H1 (cell line): ENCODE measurements at regions of chr3 and their contacts with region 1.

Region 1: DNA sequence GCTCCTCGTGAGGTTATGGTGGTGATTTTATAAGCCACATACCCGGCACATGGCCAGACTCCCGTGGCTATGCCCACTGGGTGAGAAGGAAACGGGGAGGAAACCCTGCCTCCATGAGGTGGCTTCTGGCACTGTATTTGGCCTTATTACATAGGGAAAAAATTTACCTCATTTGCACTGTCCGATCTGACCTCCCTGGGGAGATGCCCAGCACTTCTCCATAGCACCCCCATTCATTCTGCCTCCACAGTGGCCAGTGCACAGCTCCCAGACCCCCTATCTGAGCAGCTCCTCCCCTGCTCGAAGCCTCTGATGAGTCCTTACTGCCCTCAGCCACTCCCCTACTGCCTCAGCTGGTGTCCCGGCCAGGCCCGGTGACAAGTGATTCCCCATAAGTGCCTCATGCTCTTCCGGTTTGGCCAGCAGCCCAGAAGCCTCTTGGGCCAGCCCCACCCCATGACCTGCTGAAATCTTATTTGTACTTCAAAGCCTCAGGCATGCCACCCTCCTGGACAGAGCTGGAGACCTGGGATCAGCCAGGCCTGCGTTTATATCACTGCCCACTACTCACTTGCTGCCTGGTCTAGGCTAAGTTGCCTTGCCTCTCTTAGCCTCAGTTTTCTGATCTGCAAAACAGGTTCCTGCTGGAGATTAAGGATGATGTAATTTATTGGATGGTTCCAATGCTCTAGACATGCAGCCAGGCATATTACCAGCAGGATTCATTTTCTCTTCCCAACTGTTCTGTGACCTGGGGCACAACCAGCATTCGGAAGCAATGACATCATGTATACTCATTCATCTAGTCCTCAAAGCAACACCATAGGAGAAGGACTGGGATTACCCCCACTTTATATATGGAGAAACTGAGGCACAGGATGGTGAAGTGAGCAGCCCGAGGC is 30.6 kb upstream of the SLC6A6 start:
- DNase-seq: no peak
- H3K4me3 ChIP-seq: no peak overlapping the region
- H3K27ac ChIP-seq: no peak overlapping the region
- H3K4me1 ChIP-seq: peaks cover 2 to 21% (median 5%) of the 10 kb centered on the region in 4 experiments; a peak in 6 of 7 replicates
- H3K27me3 ChIP-seq: no peaks in the 10 kb centered on the region
- CTCF ChIP-seq: no peak
- EP300 ChIP-seq: no peak
- POLR2A ChIP-seq: no peak
- RAD21 ChIP-seq: no peak

Region 2: DNA sequence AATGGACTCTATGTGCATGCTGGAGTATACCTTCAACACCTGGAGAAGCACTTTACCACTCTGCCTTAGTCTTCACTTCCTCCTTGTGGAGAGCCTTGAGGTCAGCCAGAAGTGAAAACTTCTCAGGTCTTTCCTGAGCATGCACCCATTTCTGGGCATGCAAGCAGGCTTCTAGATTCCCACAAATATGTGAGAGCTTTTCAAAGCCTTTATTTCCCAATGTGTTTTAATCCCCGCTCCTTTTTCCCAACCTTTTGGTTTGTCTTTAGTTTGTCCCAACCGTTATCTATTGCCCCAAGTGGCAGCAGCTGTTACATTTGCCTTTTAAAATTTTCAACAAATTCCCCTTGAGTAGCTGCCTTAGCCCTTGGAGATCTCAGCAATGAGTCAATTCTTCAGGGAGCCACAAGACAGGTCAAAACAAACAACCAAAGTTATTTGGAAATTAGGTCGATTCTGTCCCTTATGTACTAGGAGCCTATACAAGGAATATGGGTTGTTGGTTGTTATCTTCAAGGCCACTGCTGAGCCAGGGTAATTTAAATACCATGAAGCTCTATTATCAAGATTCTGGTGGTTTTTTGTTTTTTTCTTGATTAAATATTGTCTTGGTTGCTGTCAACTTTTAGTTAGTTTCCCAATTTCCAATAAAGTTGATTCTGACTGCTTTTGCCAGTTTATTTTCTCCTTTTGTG is 148.8 kb before region 1 on chr3:
- CTCF ChIA-PET with region 1: no interaction called
- POLR2A ChIA-PET with region 1: no interaction called
- DNase-seq: no peak
- H3K4me3 ChIP-seq: no peak overlapping the region
- H3K27ac ChIP-seq: no peak overlapping the region
- H3K4me1 ChIP-seq: peaks cover 0 to 5% (median 0%) of the 10 kb centered on the region in 4 experiments; a peak in 1 of 7 replicates
- H3K27me3 ChIP-seq: no peaks in the 10 kb centered on the region
- CTCF ChIP-seq: no peak
- EP300 ChIP-seq: no peak
- POLR2A ChIP-seq: no peak
- RAD21 ChIP-seq: no peak

Region 3: GRCh38 chr3:14352002-14352627 is 19.7 kb before region 1 on chr3:
- CTCF ChIA-PET with region 1: interaction called, 12 read pairs
- POLR2A ChIA-PET with region 1: no interaction called
- DNase-seq: peak in 1 of 2 experiments; percentile 67
- H3K4me3 ChIP-seq: no peak overlapping the region
- H3K27ac ChIP-seq: no peak overlapping the region
- H3K4me1 ChIP-seq: peaks cover 0 to 10% (median 3%) of the 10 kb centered on the region in 4 experiments; a peak in 6 of 7 replicates
- H3K27me3 ChIP-seq: peaks cover 0 to 8% (median 0%) of the 10 kb centered on the region in 4 experiments; a peak in 2 of 7 replicates
- CTCF ChIP-seq: no peak
- EP300 ChIP-seq: no peak
- POLR2A ChIP-seq: no peak
- RAD21 ChIP-seq: no peak

Region 4: GRCh38 chr3:14391033-14391432 is 19.2 kb after region 1 on chr3:
- CTCF ChIA-PET with region 1: interaction called, 70 read pairs
- POLR2A ChIA-PET with region 1: interaction called, 7 read pairs
- DNase-seq: no peak
- H3K4me3 ChIP-seq: no peak overlapping the region
- H3K27ac ChIP-seq: no peak overlapping the region
- H3K4me1 ChIP-seq: peaks cover 0 to 5% (median 3%) of the 10 kb centered on the region in 4 experiments; a peak in 6 of 7 replicates
- H3K27me3 ChIP-seq: no peaks in the 10 kb centered on the region
- CTCF ChIP-seq: no peak
- EP300 ChIP-seq: no peak
- POLR2A ChIP-seq: no peak
- RAD21 ChIP-seq: no peak

Region 5: GRCh38 chr3:14448756-14449727 is 77.2 kb after region 1 on chr3:
- CTCF ChIA-PET with region 1: no interaction called
- POLR2A ChIA-PET with region 1: no interaction called
- DNase-seq: no peak
- H3K4me3 ChIP-seq: no peak overlapping the region
- H3K27ac ChIP-seq: no peak overlapping the region
- H3K4me1 ChIP-seq: peaks cover 0 to 2% (median 0%) of the 10 kb centered on the region in 4 experiments; a peak in 1 of 7 replicates
- H3K27me3 ChIP-seq: no peaks in the 10 kb centered on the region
- CTCF ChIP-seq: no peak
- EP300 ChIP-seq: no peak
- POLR2A ChIP-seq: no peak
- RAD21 ChIP-seq: no peak

Region 6: DNA sequence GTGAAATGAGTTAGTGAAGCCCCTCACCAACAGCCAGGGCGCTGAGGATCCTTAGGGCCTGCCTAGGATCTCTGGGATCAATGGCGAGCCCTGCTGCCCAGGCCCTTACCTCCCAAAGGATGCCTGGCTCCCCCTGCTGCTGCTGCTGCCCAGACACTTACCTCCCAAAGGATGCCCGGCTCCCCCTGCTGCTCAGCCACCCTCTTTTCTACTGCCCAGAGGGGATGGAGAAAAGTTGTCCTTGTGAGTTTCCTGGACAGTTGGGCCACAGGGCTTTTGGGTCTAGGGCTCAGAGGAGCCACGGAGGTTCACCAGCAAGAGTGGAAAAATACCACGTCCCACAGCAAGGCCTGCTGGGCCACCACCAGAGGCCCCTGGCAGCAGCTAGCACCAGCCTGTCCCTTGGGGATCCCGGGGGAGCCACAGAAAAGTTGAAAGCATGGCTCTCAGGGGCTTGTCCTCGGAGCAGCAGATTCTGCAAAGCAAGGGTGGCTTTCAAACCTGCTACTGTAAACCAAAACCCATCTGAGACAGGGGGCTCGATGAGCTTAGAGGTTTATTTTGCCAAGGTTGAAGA is 90.0 kb after region 1 on chr3:
- CTCF ChIA-PET with region 1: interaction called, 11 read pairs
- POLR2A ChIA-PET with region 1: no interaction called
- DNase-seq: no peak
- H3K4me3 ChIP-seq: no peak overlapping the region
- H3K27ac ChIP-seq: no peak overlapping the region
- H3K4me1 ChIP-seq: peaks cover 0 to 8% (median 5%) of the 10 kb centered on the region in 4 experiments; a peak in 6 of 7 replicates
- H3K27me3 ChIP-seq: no peaks in the 10 kb centered on the region
- CTCF ChIP-seq: peak in 2 of 3 experiments; percentile 77 to 99; a peak in 3 of 4 replicates
- EP300 ChIP-seq: no peak
- POLR2A ChIP-seq: no peak
- RAD21 ChIP-seq: peak; percentile 79 to 83

Region 7: DNA sequence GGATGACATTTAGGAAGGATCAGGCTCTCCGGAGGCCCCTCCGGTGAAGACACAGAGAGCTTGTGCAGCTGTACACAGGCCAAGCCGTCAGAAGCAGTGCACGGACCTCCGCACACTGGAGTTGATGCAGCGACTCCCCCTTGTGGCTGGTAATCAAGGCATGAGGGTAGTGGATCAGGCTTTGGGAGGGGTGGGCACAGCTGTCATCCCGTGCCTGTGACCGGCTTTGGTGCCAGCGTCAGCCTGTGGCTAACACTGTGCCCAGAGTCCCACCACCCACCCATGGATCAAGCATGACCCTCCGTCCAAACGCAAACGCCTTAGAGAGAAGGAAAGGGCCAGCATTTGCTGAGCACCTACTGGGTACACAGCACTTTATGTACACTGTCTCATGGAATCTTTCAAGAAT is 176.5 kb after region 1 on chr3:
- CTCF ChIA-PET with region 1: no interaction called
- POLR2A ChIA-PET with region 1: no interaction called
- DNase-seq: peak; percentile 23 to 76
- H3K4me3 ChIP-seq: no peak overlapping the region
- H3K27ac ChIP-seq: no peak overlapping the region
- H3K4me1 ChIP-seq: peaks cover 0 to 3% (median 0%) of the 10 kb centered on the region in 4 experiments; a peak in 1 of 7 replicates
- H3K27me3 ChIP-seq: no peaks in the 10 kb centered on the region
- CTCF ChIP-seq: peak; percentile 92 to 97 (median 94)
- EP300 ChIP-seq: no peak
- POLR2A ChIP-seq: no peak
- RAD21 ChIP-seq: peak; percentile 81 to 91